Heart right ventricle (tissue), 16 donors: ENCODE measurements at regions of chr4 and their contacts with region 1.

Region 1: GRCh38 chr4:39697740-39698423 is at the start of gene UBE2K:
- DNase-seq: peak; percentile 86 to 93
- ATAC-seq: peak; percentile 97 to 100 (median 98)
- H3K4me3 ChIP-seq: peak within 1 kb of the TSS; percentile 69 to 95 (median 80)
- H3K27ac ChIP-seq: peak within 1 kb of the TSS; percentile 51 to 99 (median 95)
- H3K4me1 ChIP-seq: peaks cover 0 to 49% (median 33%) of the 10 kb centered on the region in 9 donors
- H3K27me3 ChIP-seq: no peaks in the 10 kb centered on the region
- CTCF ChIP-seq: peak in 2 of 9 donors; percentile 6 to 14
- total RNA-seq, gene UBE2K: 52.9 to 74.0 (median 57.7) TPM

Region 2: GRCh38 chr4:38132107-38132673 is 1565.7 kb before region 1 on chr4:
- intact Hi-C with region 1: no loop called
- DNase-seq: peak in 1 of 2 donors; percentile 55
- ATAC-seq: peak in 7 of 8 donors; percentile 63 to 86 (median 81)
- H3K4me3 ChIP-seq: no peak overlapping the region
- H3K27ac ChIP-seq: peak overlapping the region; percentile 22 to 67 (median 44)
- H3K4me1 ChIP-seq: peaks cover 0 to 63% (median 38%) of the 10 kb centered on the region in 9 donors
- H3K27me3 ChIP-seq: no peaks in the 10 kb centered on the region
- CTCF ChIP-seq: no peak

Region 3: GRCh38 chr4:39527273-39528060 is 170.4 kb before region 1 on chr4 and contains the start of gene UGDH:
- intact Hi-C with region 1: loop called in 1 of 10 experiments (anchors 5 kb)
- DNase-seq: peak; percentile 96 to 97
- ATAC-seq: peak; percentile 98 to 100 (median 99)
- H3K4me3 ChIP-seq: peak within 1 kb of the TSS; percentile 74 to 98 (median 88)
- H3K27ac ChIP-seq: peak within 1 kb of the TSS; percentile 92 to 99 (median 96)
- H3K4me1 ChIP-seq: peaks cover 0 to 31% (median 21%) of the 10 kb centered on the region in 9 donors
- H3K27me3 ChIP-seq: no peaks in the 10 kb centered on the region
- CTCF ChIP-seq: peak in 5 of 9 donors; percentile 2 to 36 (median 26)
- total RNA-seq, gene UGDH: 10.8 to 27.3 (median 12.5) TPM

Region 4: DNA sequence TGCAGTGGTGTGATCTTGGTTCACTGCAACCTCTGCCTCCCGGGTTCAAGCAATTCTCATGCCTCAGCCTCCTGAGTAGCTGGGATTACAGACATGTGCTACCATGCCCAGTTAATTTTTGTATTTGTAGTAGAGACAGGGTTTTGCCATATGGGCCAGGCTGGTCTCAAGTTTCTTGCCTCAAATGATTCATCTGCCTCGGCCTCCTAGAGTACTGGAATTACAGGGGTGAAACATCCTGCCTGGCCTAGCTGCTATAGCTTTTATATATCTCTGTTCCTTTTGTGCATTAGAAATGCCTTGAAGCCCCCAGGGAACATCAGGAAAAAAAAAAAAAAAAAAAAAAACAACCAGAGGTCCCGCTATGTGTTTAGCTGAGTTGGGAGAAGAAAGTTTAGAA is 34.8 kb after region 1 on chr4:
- intact Hi-C with region 1: loop called in 1 of 10 experiments (anchors 5 kb)
- DNase-seq: no peak
- ATAC-seq: no peak
- H3K4me3 ChIP-seq: no peak overlapping the region
- H3K27ac ChIP-seq: no peak overlapping the region
- H3K4me1 ChIP-seq: peaks cover 0 to 35% (median 8%) of the 10 kb centered on the region in 9 donors
- H3K27me3 ChIP-seq: no peaks in the 10 kb centered on the region
- CTCF ChIP-seq: no peak

Region 5: GRCh38 chr4:39899291-39899690 is 201.4 kb after region 1 on chr4:
- intact Hi-C with region 1: loop called in 1 of 10 experiments (anchors 10 kb)
- DNase-seq: no peak
- ATAC-seq: no peak
- H3K4me3 ChIP-seq: no peak overlapping the region
- H3K27ac ChIP-seq: no peak overlapping the region
- H3K4me1 ChIP-seq: no peaks in the 10 kb centered on the region
- H3K27me3 ChIP-seq: no peaks in the 10 kb centered on the region
- CTCF ChIP-seq: no peak

Region 6: DNA sequence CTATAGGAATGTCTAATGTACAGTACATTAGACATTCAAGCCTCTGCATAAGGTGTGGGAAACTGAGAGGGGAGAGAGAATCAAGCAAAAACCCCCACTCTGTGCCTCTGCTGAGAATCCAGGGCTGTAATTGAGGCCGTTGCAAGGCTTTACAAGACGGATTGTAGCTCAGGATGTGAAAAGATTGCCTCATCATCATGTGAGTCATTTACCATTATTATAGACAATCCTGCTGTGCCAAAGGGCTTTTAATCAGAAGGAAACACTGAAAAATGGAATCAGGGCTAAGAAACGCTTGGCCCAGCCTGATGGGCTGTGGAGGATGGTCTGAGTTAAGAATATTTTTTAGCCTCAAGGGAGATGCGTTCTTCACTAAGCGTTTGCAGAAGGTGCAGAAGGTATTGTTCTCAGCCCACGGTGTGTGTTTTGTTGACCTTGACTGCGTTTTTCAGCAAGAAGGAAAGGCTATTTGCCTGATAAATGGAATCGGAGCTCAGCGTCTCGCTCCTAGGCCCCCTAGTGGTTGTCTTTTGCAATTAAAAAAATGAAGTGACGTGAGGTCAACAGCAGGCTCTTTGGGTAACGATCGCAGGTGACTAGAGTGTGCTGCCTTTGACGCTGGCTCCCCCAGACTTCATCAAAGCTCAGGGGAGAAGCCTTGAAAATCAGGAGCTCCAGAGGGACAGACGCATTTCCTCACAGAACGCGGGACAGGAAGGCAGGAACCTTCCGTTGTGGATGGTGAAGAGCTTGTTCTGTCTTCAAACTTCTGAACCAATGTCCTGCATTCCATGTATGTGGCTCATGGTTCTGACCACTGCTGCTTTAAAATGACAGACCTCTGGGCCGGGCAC is 619.1 kb after region 1 on chr4:
- intact Hi-C with region 1: loop called in 1 of 10 experiments (anchors 5 kb)
- DNase-seq: peak in 1 of 2 donors; percentile 39
- ATAC-seq: peak; percentile 54 to 87 (median 72)
- H3K4me3 ChIP-seq: peak overlapping the region in 8 of 10 donors; percentile 4 to 47 (median 32)
- H3K27ac ChIP-seq: peak overlapping the region in 6 of 10 donors; percentile 16 to 79 (median 36)
- H3K4me1 ChIP-seq: peaks cover 0 to 20% (median 9%) of the 10 kb centered on the region in 9 donors
- H3K27me3 ChIP-seq: peaks cover 0 to 5% (median 0%) of the 10 kb centered on the region in 7 donors
- CTCF ChIP-seq: peak; percentile 58 to 86 (median 79)